Mammary epithelial cell (primary cell): ENCODE measurements at regions of chr10 and their contacts with region 1.

Region 1: DNA sequence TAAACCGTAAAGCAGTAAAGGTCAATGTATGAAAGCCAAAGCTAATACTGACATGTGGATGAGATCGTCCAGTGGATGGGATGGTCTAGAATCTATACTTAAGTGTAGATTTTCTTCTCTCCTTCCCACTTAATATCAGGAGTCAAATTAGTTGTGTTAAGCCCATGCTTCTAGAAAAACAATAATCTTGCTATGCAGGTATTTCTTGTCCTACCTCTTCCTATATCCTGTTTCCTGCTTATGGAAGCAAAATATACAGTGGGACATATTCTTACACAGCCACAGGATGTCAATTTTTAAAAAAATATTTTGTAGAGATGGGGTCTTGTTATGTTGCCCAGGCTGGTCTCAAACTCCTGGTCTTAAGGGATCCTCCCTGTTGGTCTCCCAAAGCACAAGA is 27.5 kb downstream of the CPEB3 start:
- DNase-seq: no peak
- H3K4me3 ChIP-seq: no peak overlapping the region
- H3K27ac ChIP-seq: no peak overlapping the region
- H3K4me1 ChIP-seq: peaks cover 8% of the 10 kb centered on the region
- H3K27me3 ChIP-seq: no peaks in the 10 kb centered on the region
- CTCF ChIP-seq: no peak

Region 2: DNA sequence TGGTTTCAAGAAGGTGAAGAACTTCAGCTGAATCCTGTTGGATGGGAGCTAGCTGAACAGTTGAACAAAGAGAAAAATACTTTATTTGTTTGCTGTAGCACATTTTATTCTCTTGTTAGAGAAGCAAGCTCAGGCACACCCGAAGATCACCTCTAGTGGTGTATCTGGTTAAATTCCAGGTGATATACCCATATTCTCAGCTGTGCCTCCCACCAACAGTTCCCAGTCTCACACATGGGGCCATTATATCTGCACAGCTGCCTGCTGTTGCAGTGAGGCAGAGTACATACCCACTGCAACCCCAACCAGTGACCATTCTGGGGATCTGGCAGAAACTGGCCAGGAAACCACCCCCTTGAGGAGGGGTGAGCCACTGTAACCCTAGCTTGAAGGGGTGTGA is 330.7 kb before region 1 on chr10:
- CTCF ChIA-PET with region 1: no interaction called
- dilution Hi-C with region 1: no loop called
- in situ Hi-C with region 1: no loop called
- intact Hi-C with region 1: no loop called
- DNase-seq: no peak
- H3K4me3 ChIP-seq: no peak overlapping the region
- H3K27ac ChIP-seq: no peak overlapping the region
- H3K4me1 ChIP-seq: peaks cover 20% of the 10 kb centered on the region
- H3K27me3 ChIP-seq: no peaks in the 10 kb centered on the region
- CTCF ChIP-seq: no peak

Region 3: DNA sequence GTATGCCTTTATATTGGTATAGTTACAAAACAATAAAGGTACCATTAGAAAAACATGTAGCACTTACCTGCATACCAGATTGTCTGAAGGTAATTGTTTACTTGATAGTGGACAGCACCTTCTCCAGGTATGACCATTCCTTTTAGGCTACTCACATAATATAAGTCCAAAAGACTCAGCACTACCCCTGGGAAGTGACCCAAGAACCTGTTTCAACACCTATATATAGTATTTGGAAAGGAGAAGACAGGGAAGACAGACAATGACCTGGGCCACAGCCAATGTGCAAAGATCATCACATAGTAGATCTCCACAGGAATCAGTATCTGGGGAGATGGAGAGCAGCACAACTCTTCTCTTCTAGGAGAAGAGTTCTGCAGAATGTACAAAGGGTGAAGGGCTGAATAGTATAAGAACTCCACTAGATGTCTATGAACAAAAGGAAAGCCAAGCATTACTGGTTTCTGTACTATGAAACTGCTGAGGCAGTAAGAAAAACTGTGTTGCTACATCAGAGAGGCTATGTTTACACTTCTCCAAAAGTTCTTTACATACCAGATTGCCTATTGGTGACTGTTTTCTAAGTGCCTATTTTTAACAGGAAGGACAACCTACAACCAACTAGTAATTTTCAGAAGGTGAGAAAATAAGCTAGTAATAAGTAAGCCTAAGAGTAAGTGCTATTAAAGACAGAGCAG is 180.7 kb before region 1 on chr10:
- CTCF ChIA-PET with region 1: no interaction called
- dilution Hi-C with region 1: no loop called
- in situ Hi-C with region 1: no loop called
- intact Hi-C with region 1: no loop called
- DNase-seq: no peak
- H3K4me3 ChIP-seq: no peak overlapping the region
- H3K27ac ChIP-seq: no peak overlapping the region
- H3K4me1 ChIP-seq: peaks cover 6% of the 10 kb centered on the region
- H3K27me3 ChIP-seq: no peaks in the 10 kb centered on the region
- CTCF ChIP-seq: no peak

Region 4: DNA sequence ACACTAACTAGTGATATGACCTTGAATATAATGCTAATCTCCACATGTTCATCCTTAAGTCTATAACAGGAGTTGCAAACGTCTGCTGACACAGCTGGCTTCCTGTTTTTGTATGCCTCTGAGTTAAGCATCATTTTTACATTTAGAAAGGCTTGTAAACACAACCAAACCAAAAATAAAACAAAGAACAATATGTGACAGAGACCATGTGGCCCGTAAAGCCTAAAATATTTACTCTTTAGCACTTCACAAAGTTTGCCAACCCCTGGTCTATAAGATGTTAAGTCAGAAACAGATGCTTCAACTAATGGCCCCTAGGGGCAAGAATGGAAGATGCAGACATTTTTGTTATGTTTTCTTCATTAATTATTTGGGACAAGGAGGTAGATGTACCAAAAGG is 81.8 kb before region 1 on chr10:
- CTCF ChIA-PET with region 1: no interaction called
- dilution Hi-C with region 1: loop called (anchors 5 kb)
- in situ Hi-C with region 1: no loop called
- intact Hi-C with region 1: no loop called
- DNase-seq: no peak
- H3K4me3 ChIP-seq: no peak overlapping the region
- H3K27ac ChIP-seq: no peak overlapping the region
- H3K4me1 ChIP-seq: no peaks in the 10 kb centered on the region
- H3K27me3 ChIP-seq: no peaks in the 10 kb centered on the region
- CTCF ChIP-seq: peak; percentile 17 to 35

Region 5: DNA sequence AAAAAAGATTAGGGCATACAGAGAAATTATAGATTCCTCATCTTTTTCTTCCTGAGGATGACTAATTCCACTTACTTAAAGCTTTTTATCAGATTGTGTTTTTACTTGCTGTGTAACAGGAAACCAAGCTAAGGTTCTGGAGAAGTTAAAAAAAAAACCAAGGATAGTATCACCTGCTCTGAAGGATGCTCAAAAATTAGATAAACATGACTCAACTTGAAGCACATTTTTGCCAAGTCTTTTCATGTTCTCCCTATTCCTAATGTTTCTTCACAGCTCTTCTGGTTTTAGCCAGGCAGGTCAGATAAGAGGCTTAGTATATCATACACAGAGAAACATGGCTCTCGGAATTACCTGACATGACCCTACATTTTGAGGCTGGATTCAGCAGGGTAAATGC is 62.8 kb before region 1 on chr10:
- CTCF ChIA-PET with region 1: no interaction called
- dilution Hi-C with region 1: no loop called
- in situ Hi-C with region 1: no loop called
- intact Hi-C with region 1: no loop called
- DNase-seq: peak; percentile 90
- H3K4me3 ChIP-seq: no peak overlapping the region
- H3K27ac ChIP-seq: no peak overlapping the region
- H3K4me1 ChIP-seq: peaks cover 5% of the 10 kb centered on the region
- H3K27me3 ChIP-seq: no peaks in the 10 kb centered on the region
- CTCF ChIP-seq: no peak